ENCODE measurements at regions of chr6 and their contacts with region 1.

Region 1: DNA sequence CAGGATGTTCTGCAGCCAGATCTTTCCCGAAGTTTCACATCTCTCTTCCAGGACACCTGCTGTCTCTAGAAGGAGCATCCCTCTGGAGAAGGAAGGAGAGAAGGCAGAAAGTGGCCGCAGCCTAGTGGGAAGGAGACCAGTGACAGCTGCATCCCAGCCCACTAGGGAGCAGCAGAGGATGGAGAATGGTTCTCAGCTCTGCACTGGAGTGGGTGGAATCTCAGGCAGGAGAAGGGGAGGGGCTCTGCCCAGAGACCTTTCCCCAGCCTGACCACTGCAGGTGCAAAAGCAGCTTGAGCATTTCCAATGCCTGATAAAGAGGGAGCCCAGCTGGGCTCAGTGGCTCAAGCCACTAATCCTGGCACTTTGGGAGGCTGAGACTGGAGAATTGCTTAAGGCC is 32.3 kb downstream of the NCR2 start:
- DNase-seq: peak; percentile 71
- ATAC-seq: peak; percentile 76

Region 2: GRCh38 chr6:41200296-41200900 is 167.3 kb before region 1 on chr6:
- intact Hi-C with region 1: no loop called
- DNase-seq: no peak
- ATAC-seq: peak; percentile 60

Region 3: DNA sequence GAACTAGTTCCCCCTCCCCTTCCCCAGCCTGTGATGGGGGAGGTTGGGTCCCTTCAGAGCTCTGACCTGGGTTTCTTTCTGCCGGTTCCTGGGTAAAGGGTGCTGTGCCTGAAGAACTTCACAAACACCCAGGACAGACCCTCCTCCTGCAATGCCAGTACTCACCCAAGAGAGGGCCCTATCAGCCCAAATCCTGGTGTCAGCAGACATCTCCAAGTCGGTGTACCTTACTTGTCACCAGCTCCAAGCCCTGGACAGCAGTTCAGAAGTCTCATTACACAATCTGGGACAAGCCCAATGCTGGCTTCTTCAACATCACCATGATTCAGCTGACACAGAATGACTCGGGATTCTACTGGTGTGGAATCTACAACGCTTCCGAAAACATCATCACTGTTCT is 139.1 kb before region 1 on chr6:
- intact Hi-C with region 1: no loop called
- DNase-seq: no peak
- ATAC-seq: no peak

Region 4: GRCh38 chr6:41356790-41357189 is 10.9 kb before region 1 on chr6:
- intact Hi-C with region 1: no loop called
- DNase-seq: no peak
- ATAC-seq: no peak

Region 5: GRCh38 chr6:41591859-41592502 is 224.3 kb after region 1 on chr6:
- intact Hi-C with region 1: loop called (anchors 5 kb)
- DNase-seq: peak; percentile 91
- ATAC-seq: peak; percentile 79

Region 6: DNA sequence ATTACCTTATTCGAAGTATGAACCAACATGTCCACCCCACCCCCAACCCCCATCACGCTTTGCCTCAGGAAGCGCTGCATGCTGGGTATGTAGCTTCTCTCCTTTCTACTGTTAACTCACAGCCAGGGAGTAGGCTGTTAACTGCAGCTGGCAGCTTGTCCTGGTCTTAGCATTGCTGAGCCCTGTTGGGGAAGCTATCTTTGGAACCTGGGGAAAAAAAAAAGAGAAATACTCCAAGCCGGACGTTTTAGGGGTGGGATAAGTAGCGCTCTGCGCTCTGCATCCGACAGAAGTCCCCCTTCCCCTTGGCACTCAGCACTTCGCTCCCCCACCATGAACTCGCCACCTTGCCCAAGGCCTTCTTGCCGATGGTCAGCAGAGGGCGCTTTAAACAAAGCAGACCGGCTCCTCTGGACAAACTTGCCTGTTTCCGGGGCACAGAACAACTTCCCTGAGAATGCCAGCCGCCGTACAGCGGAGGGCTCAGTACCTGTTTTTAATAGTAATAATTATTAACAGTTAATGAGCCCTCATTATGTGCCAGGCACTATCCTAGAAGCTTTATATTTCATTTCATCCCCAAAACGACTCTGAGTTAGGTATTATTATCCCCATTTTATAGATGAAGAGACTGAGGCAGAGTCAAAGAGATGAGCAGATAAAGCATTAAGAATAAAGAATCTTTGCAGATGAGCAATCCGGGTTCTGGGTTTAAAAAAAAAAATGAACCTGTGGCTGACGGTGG is 235.3 kb after region 1 on chr6:
- intact Hi-C with region 1: loop called (anchors 5 kb)
- DNase-seq: peak; percentile 90
- ATAC-seq: peak; percentile 85

Region 7: DNA sequence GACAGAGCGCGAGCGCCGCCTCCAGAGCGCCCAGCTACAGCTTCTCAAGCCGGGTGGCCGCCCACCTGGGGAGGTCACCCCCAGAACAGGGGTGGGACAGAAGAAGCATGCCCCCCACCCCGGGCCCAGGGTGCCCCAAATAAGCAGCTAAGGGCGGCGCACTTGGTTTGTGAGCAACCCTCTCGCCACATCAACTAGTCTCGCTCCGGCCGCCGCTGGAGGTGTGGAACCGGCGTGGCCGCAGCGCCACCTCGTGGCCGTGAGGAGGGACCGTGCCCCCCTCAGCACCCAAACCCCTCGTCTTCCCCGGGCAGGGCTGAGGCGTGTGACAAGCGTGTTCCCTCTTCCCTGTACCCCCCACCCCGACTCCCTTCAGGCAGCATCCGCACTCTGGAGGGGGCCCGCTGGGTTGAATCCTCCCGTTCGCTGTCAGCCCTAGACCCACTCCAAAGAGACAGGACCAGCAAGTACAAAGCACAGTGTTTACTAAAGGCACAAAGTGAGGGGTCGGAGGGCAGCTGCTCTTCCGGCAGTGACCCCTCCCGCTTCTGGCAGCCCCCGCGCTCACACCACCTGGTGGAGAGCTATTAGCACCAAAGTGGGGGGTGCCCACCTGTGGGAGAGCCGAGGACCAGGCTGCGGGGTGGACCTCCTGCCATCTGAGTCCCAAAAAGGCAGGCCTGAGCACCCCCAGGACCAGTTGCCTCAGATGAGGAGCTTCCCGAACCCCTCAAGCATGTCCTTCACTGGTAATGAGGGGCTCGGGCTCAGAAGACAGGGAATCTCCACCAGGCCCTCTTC is 316.0 kb after region 1 on chr6:
- intact Hi-C with region 1: loop called (anchors 2 kb)
- DNase-seq: peak; percentile 90
- ATAC-seq: peak; percentile 91

Region 8: DNA sequence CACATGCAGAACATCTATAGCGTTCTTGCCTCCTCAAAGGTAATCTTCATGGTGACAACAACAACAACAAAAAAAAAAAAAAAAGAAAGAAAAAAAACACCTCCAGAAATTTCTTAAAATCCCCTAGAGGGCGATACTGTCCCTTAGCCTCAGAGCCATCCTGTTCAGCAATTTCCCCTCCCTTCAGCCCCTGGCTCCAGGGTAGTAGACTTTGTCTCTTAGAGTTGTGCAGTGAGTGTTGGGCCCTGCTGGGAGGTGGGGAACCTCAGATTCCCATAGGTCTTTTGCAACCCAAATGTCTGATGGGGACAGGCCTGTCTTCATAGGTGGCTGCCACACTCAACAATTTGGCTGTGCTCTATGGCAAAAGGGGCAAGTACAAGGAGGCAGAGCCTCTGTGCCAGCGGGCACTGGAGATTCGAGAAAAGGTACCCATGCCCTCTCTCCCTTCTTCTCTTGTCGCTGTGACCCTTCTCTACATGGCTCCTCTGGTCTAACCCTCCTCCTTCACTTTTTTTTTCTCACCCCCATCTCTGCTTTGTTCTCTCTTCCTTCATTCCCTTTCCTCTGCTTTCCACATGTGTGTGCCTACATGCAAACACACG is 1702.4 kb after region 1 on chr6:
- intact Hi-C with region 1: no loop called
- DNase-seq: no peak
- ATAC-seq: peak; percentile 39

Measured in sciatic nerve (tissue), 2 donors.